ENCODE measurements at regions of chr14 and their contacts with region 1.

Region 1: DNA sequence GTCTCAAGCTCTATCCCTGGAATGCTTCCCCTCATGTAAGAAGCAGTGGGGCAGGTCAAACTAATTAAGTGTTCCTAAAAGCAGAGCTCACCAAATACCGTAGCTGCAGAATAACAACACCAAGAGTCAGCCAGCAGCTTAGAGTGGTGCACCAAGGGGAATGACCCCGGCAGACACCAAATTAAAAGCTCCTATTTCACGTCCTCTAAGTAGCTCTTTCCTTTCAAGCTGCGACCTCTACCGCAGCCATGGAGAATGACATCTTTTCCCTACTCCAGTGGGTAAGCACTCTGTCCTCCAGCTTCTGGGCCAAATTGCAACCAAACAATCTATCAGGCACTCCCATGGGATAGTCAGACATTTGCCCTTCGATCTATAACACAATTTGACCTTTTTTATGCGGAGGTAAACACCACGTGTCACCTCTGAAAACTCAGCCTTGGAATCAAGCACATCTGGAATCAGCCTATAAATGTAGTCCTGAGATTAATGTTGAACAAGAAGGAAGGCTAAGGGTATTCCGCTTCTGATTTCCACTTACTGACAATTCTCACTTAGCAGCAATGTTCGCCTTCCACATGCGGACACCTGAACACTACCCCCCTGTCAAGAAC is 67.6 kb upstream of the CDKN3 start:
- DNase-seq: peak; percentile 60
- ATAC-seq: peak; percentile 99
- H3K4me3 Mint-ChIP-seq: no peak overlapping the region
- H3K27ac Mint-ChIP-seq: no peak overlapping the region
- H3K4me1 Mint-ChIP-seq: peaks cover 3% of the 10 kb centered on the region
- H3K27me3 Mint-ChIP-seq: no peaks in the 10 kb centered on the region
- CTCF ChIP-seq: peak; percentile 68

Region 2: GRCh38 chr14:53539489-53540126 is 789.6 kb before region 1 on chr14:
- CTCF ChIA-PET with region 1: interaction called, 13 read pairs
- POLR2A ChIA-PET with region 1: no interaction called
- DNase-seq: peak; percentile 90
- ATAC-seq: peak; percentile 97
- H3K4me3 Mint-ChIP-seq: no peak overlapping the region
- H3K27ac Mint-ChIP-seq: no peak overlapping the region
- H3K4me1 Mint-ChIP-seq: peaks cover 8% of the 10 kb centered on the region; the same call in 1 of the 2 replicates
- H3K27me3 Mint-ChIP-seq: no peaks in the 10 kb centered on the region
- CTCF ChIP-seq: peak; percentile 52; the same call in 1 of the 2 replicates

Region 3: GRCh38 chr14:53953002-53953827 is 376.0 kb before region 1 on chr14:
- CTCF ChIA-PET with region 1: interaction called, 11 read pairs
- POLR2A ChIA-PET with region 1: interaction called, 3 read pairs
- DNase-seq: peak; percentile 81
- ATAC-seq: peak; percentile 33
- H3K4me3 Mint-ChIP-seq: peak overlapping the region; percentile 97
- H3K27ac Mint-ChIP-seq: peak overlapping the region; percentile 94
- H3K4me1 Mint-ChIP-seq: peaks cover 53% of the 10 kb centered on the region
- H3K27me3 Mint-ChIP-seq: peaks cover 85% of the 10 kb centered on the region
- CTCF ChIP-seq: no peak

Region 4: GRCh38 chr14:54186821-54187763 is 142.1 kb before region 1 on chr14:
- CTCF ChIA-PET with region 1: interaction called, 16 read pairs
- POLR2A ChIA-PET with region 1: no interaction called
- DNase-seq: no peak
- ATAC-seq: peak; percentile 47; the same call in 1 of the 2 replicates
- H3K4me3 Mint-ChIP-seq: no peak overlapping the region
- H3K27ac Mint-ChIP-seq: no peak overlapping the region
- H3K4me1 Mint-ChIP-seq: peaks cover 16% of the 10 kb centered on the region
- H3K27me3 Mint-ChIP-seq: peaks cover 9% of the 10 kb centered on the region
- CTCF ChIP-seq: no peak

Region 5: DNA sequence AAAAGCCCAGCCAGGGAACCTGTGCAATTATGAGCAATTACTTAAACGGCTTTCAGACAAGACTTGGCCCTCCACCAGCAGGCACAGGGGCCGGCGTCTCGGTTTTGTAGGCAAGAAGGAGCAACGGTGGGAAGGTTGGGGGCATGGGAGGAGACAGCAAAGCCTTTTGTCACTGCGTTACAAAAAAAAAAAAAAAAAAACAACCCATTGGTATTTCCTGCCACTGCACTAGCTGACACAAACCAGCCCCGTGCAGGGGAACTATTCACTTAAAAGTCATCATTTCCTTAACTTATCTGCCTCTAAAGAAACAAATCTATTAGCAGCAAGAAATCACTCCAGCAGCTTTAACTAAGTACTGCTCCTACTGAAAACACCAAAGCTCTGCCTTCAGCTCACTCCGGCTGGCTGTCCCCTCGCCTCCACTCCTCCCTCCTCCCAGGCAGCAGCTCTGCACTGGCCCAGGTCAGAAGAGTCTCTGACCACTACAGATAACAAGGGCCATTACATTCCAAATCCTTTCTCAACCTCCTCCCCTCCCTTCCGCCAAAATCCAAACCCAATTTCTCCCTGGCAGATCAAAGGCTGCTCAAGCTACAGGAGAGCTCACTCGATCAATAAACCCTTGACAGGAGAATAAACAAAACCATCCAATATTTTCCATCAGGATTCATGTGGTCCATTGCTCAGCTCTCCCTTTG is 37.5 kb before region 1 on chr14:
- CTCF ChIA-PET with region 1: interaction called, 12 read pairs
- POLR2A ChIA-PET with region 1: no interaction called
- DNase-seq: no peak
- ATAC-seq: peak; percentile 93
- H3K4me3 Mint-ChIP-seq: no peak overlapping the region
- H3K27ac Mint-ChIP-seq: peak overlapping the region; percentile 36; the same call in 1 of the 2 replicates
- H3K4me1 Mint-ChIP-seq: peaks cover 18% of the 10 kb centered on the region
- H3K27me3 Mint-ChIP-seq: no peaks in the 10 kb centered on the region; the same call in 1 of the 2 replicates
- CTCF ChIP-seq: no peak

Measured in WTC11 (cell line).